Esophagus muscularis mucosa (tissue), 4 donors: ENCODE measurements at regions of chr18 and their contacts with region 1.

Region 1: DNA sequence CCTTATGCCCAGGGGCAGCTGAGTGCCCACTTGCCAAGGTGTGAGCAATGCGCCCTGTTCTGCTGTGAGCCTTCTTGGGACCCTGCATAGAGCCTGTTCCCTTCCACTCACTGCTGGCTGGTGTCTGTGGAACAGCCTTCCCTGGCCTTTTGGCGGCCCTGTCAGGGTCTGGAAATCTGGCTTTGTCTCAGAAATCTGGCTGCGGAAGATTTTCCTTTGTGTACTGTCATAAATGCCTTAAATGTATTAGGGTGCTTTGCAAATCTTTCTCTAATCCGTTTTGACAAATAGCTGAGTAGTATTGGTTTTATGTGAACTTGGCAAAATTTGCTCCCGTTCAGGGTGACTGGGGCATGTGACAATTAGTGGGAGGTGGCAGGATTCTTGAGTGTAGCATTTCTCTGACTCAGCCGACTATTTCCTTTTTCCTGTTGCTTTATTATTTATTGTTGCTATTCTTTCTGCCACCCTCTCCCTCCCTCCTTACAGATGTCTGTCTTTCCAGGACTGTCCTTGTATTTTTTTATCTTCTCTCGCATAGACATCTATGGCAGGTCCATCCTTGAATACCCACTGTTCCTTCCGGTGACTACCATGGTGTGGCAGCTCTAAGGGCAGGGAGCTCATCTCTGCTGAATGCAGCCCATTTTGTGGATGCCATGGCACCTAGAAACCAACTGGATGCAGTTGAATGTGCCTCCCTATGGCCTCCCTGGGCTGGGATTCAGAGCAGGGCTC is 41.8 kb downstream of the LDLRAD4 start:
- DNase-seq: no peak
- H3K4me3 ChIP-seq: peak overlapping the region in 2 of 4 donors; percentile 1 to 7
- H3K27ac ChIP-seq: peak overlapping the region; percentile 77 to 85 (median 84)
- H3K4me1 ChIP-seq: peaks cover 65 to 77% (median 74%) of the 10 kb centered on the region in 4 donors
- H3K27me3 ChIP-seq: no peaks in the 10 kb centered on the region
- CTCF ChIP-seq: no peak
- EP300 ChIP-seq: no peak
- POLR2A ChIP-seq: no peak

Region 2: GRCh38 chr18:13221869-13222855 is 38.2 kb before region 1 on chr18:
- intact Hi-C with region 1: loop called (anchors 5 kb)
- DNase-seq: peak; percentile 93
- H3K4me3 ChIP-seq: peak overlapping the region; percentile 3 to 27 (median 22)
- H3K27ac ChIP-seq: peak overlapping the region; percentile 87 to 92 (median 90)
- H3K4me1 ChIP-seq: peaks cover 48 to 74% (median 65%) of the 10 kb centered on the region in 4 donors
- H3K27me3 ChIP-seq: no peaks in the 10 kb centered on the region
- CTCF ChIP-seq: no peak
- EP300 ChIP-seq: no peak
- POLR2A ChIP-seq: no peak

Region 3: GRCh38 chr18:13318731-13319501 is 58.5 kb after region 1 on chr18:
- intact Hi-C with region 1: no loop called
- DNase-seq: peak; percentile 91
- H3K4me3 ChIP-seq: no peak overlapping the region
- H3K27ac ChIP-seq: peak overlapping the region; percentile 14 to 68 (median 34)
- H3K4me1 ChIP-seq: peaks cover 10 to 47% (median 38%) of the 10 kb centered on the region in 4 donors
- H3K27me3 ChIP-seq: no peaks in the 10 kb centered on the region
- CTCF ChIP-seq: no peak
- EP300 ChIP-seq: no peak
- POLR2A ChIP-seq: no peak

Region 4: GRCh38 chr18:13375302-13376255 is 115.2 kb after region 1 on chr18:
- intact Hi-C with region 1: loop called (anchors 5 kb)
- DNase-seq: peak; percentile 92
- H3K4me3 ChIP-seq: no peak overlapping the region
- H3K27ac ChIP-seq: peak overlapping the region; percentile 60 to 77 (median 65)
- H3K4me1 ChIP-seq: peaks cover 37 to 64% (median 43%) of the 10 kb centered on the region in 4 donors
- H3K27me3 ChIP-seq: no peaks in the 10 kb centered on the region
- CTCF ChIP-seq: peak in 2 of 3 experiments; percentile 16 to 27
- EP300 ChIP-seq: no peak
- POLR2A ChIP-seq: no peak